ENCODE measurements at regions of chr1 and their contacts with region 1.

Region 1: DNA sequence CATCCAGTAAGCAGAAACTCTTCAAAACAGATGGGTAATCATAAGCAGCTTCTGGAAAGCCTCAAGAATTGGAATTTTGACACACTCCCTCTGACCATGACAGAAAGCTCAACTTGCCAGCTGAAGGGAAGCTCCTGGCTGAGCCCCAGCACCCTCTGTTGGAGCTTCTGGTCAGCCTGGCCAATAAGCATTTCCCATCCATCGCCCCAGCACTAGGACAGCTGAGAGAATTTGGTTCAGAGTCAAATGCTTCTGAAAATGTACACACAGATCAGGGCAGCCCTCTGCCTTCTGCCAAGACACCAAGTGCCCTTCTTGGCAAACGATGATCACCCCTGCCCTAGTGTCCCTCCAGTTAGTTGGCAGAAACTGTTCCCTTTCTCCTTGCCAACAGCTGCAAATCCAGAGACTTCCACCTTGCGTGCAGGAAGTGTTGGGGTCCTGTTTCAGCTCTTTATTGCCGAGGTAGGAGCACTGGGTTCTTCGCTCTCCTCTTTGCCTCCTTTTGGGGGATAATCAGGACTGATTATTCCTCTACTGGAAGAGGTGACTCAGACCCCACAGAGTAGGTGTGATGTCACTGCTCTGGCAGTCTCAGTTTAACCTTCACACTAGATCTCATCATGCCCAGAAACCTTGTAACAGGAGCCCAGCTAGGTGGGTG is 11.9 kb downstream of the PIGV start:
- DNase-seq: no peak
- H3K4me3 Mint-ChIP-seq: peak overlapping the region; percentile 55
- H3K27ac Mint-ChIP-seq: peak overlapping the region; percentile 92
- H3K4me1 Mint-ChIP-seq: peaks cover 51% of the 10 kb centered on the region
- H3K27me3 Mint-ChIP-seq: no peaks in the 10 kb centered on the region

Region 2: DNA sequence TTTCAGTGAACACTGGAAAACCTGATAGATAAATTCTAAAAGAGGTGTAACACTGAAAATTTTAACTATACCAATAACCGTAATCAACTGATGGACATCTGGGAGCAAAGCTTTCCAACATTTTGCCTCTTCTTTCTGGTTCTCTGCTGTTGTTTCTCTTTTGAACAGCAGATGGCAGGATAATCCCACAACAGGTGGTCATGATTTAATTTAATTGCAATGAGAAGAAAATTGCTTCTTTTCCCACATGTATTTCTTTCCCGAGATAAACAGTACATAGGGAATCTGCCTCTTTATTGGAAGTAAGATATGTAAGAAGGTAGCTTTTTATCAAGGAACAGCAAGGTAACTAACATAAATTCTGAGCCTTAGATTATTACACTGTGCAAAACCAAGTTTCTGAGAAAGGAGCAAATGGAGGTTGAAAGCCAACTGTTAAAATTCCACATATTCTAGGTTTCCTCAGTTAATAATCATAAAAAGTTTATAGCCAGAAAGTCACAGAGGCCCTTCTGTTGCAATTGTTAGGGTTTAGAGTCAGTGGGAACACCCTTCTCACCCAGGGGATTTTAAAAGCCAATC is 197.1 kb before region 1 on chr1:
- CTCF ChIA-PET with region 1: interaction called, 15 read pairs
- POLR2A ChIA-PET with region 1: no interaction called
- DNase-seq: peak; percentile 72
- H3K4me3 Mint-ChIP-seq: no peak overlapping the region
- H3K27ac Mint-ChIP-seq: no peak overlapping the region
- H3K4me1 Mint-ChIP-seq: peaks cover 16% of the 10 kb centered on the region
- H3K27me3 Mint-ChIP-seq: peaks cover 21% of the 10 kb centered on the region

Region 3: GRCh38 chr1:26627954-26628353 is 171.7 kb before region 1 on chr1:
- CTCF ChIA-PET with region 1: no interaction called
- POLR2A ChIA-PET with region 1: no interaction called
- DNase-seq: no peak
- H3K4me3 Mint-ChIP-seq: no peak overlapping the region
- H3K27ac Mint-ChIP-seq: no peak overlapping the region
- H3K4me1 Mint-ChIP-seq: peaks cover 4% of the 10 kb centered on the region
- H3K27me3 Mint-ChIP-seq: peaks cover 2% of the 10 kb centered on the region

Region 4: DNA sequence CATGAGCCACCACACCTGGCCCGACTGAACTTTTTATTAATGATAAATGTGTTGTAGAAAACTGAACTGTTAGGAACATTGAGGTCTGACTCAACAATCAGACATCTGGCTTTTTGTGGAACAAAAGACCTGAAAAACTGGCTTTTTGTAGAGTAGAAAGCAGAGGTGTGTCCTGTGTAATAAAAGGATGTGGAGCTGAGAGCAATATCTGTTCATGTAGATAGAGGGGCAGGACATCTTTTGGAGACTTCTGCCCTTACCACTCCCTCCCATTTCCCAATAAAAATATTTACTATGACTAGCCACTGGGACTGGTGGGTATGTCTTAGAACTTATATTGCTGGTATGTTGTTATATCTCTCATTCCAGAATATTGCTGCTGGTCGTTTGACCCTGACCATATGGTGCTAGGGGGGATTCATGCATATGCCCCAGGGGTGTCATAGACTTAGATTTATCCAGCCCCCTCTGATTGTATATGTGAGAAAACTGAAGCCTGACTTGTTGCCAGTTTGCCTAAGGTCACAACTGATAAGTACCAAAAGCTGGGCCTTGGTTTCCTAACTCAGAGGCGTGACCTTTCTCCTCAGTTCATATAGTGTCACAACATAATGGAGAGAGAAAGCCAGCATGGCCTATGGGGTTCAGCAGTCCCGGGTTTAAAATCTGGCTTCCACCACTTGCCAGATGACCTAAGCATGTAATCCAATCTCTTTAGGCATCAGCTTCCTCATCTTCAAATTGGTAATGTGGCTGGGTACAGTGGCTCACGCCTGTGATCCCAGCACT is 45.3 kb before region 1 on chr1:
- CTCF ChIA-PET with region 1: no interaction called
- POLR2A ChIA-PET with region 1: no interaction called
- DNase-seq: no peak
- H3K4me3 Mint-ChIP-seq: no peak overlapping the region
- H3K27ac Mint-ChIP-seq: no peak overlapping the region
- H3K4me1 Mint-ChIP-seq: peaks cover 40% of the 10 kb centered on the region
- H3K27me3 Mint-ChIP-seq: no peaks in the 10 kb centered on the region

Region 5: GRCh38 chr1:26811057-26811456 is 11.4 kb after region 1 on chr1:
- CTCF ChIA-PET with region 1: interaction called, 37 read pairs
- POLR2A ChIA-PET with region 1: no interaction called
- DNase-seq: no peak
- H3K4me3 Mint-ChIP-seq: no peak overlapping the region
- H3K27ac Mint-ChIP-seq: no peak overlapping the region
- H3K4me1 Mint-ChIP-seq: peaks cover 20% of the 10 kb centered on the region
- H3K27me3 Mint-ChIP-seq: no peaks in the 10 kb centered on the region